ENCODE measurements at regions of chr3 and their contacts with region 1.

Region 1: GRCh38 chr3:119034256-119035013 is at the start of gene IGSF11:
- DNase-seq: peak; percentile 47 to 80 (median 59)
- ATAC-seq: peak; percentile 86 to 99 (median 94)
- H3K4me3 ChIP-seq: peak within 1 kb of the TSS; percentile 42 to 79 (median 59)
- H3K27ac ChIP-seq: peak within 1 kb of the TSS in 4 of 12 donors; percentile 33 to 62 (median 48)
- H3K4me1 ChIP-seq: peaks cover 0 to 13% (median 0%) of the 10 kb centered on the region in 12 donors
- H3K27me3 ChIP-seq: peaks cover 0 to 57% (median 4%) of the 10 kb centered on the region in 9 donors
- CTCF ChIP-seq: peak in 11 of 12 donors; percentile 26 to 73 (median 63)
- POLR2A ChIP-seq: no peak
- total RNA-seq, gene IGSF11: 0.32 to 5.0 (median 1.5) TPM

Region 2: DNA sequence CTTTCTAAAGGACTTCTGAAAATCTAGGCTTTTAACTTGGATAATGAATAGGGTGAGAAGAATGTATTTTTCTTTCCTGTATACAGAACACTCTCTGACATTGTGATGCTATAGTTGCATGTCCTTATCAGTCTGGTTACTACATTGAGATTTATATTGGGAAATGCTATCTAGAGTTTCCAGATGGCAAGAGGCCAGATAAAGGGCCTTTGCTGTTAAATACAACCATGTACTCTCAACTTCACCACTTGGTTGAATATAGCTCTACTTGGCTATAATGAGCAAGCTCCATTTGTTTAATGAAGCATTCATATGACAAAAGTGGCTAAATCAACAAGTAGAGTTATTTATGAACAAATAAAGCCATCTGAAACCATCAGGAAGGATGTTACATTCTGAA is 90.8 kb before region 1 on chr3:
- intact Hi-C with region 1: loop called in 1 of 10 experiments (anchors 10 kb)
- DNase-seq: no peak
- ATAC-seq: peak in 2 of 4 donors; percentile 41 to 61
- H3K4me3 ChIP-seq: no peak overlapping the region
- H3K27ac ChIP-seq: no peak overlapping the region
- H3K4me1 ChIP-seq: peaks cover 0 to 15% (median 0%) of the 10 kb centered on the region in 12 donors
- H3K27me3 ChIP-seq: no peaks in the 10 kb centered on the region
- CTCF ChIP-seq: no peak
- POLR2A ChIP-seq: no peak

Region 3: GRCh38 chr3:118974356-118975097 is 59.9 kb before region 1 on chr3:
- intact Hi-C with region 1: no loop called
- DNase-seq: no peak
- ATAC-seq: no peak
- H3K4me3 ChIP-seq: no peak overlapping the region
- H3K27ac ChIP-seq: no peak overlapping the region
- H3K4me1 ChIP-seq: peaks cover 0 to 16% (median 0%) of the 10 kb centered on the region in 12 donors
- H3K27me3 ChIP-seq: no peaks in the 10 kb centered on the region
- CTCF ChIP-seq: no peak
- POLR2A ChIP-seq: no peak

Region 4: GRCh38 chr3:119091926-119092670 is 57.7 kb after region 1 on chr3:
- intact Hi-C with region 1: loop called in 4 of 10 experiments (anchors 5 kb)
- DNase-seq: no peak
- ATAC-seq: no peak
- H3K4me3 ChIP-seq: no peak overlapping the region
- H3K27ac ChIP-seq: no peak overlapping the region
- H3K4me1 ChIP-seq: no peaks in the 10 kb centered on the region
- H3K27me3 ChIP-seq: no peaks in the 10 kb centered on the region
- CTCF ChIP-seq: no peak
- POLR2A ChIP-seq: no peak

Region 5: DNA sequence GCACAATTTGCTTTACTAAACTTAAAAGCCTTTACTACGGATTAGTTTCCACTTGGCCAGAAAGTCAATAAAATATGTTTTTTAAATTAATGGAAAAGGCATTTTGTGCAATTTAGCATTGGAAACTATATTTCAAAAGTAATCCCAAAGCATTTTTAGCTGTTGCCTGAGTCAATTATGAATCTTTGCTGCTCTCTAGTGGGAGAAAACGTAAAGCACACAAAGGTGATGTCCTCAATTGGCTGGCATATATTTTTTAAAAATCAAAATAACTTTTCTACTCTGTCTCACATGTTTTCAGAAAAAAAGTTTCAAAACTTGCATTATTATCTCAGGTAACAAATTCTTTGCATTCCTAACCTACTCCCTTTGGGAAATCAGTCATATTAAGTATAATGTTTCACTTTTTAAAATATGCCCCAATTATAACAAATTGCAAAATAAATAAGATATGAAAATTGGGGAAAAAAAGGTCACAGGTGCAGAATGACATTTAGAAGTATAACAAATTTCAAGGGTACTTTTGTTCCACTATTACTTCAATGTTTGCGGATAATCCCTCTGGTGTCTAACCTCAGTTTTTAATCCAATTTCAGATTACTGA is 64.3 kb after region 1 on chr3:
- intact Hi-C with region 1: loop called in 4 of 10 experiments (anchors 5 kb)
- DNase-seq: no peak
- ATAC-seq: no peak
- H3K4me3 ChIP-seq: no peak overlapping the region
- H3K27ac ChIP-seq: no peak overlapping the region
- H3K4me1 ChIP-seq: no peaks in the 10 kb centered on the region
- H3K27me3 ChIP-seq: no peaks in the 10 kb centered on the region
- CTCF ChIP-seq: peak; percentile 46 to 81 (median 65)
- POLR2A ChIP-seq: no peak